ENCODE measurements at regions of chr7 and their contacts with region 1.

Region 1: DNA sequence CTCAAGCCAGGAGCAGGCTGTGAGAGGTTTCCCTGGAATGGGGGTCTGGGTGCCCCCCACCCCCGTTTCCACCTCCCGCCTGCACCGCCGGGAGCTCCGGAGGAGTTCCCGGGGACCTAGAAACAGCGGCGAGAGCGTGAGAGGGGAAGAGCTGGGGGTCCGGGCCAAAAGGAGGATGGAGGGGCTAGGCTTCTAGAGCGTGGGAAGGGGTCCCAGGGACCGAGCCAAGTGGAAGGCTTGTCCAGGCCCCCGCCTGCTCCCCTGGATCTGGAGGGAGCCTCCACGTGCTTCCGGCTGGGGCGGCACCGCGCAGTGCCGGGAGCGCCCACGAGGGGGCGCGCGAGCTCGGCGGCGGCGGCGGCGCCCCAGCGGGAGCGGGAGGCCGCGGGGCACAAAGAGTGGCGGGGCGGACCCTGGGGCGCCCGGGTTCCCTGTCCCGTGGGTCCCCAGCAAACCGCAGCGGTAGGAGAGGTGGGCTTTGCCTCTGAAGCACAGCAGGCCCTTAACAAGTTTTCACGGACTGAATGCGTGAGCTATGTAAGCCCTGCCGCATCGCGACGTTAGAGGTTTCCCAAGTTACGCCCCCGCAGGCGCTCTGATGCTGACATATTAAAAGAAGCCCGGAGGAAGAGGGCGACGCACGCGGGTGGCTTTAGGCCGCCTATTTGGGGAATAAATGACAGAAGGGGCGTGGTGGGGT is 104.4 kb upstream of the LRRC4 start:
- DNase-seq: peak; percentile 81
- ATAC-seq: peak; percentile 96
- H3K4me3 Mint-ChIP-seq: peak overlapping the region; percentile 82
- H3K27ac Mint-ChIP-seq: no peak overlapping the region
- H3K4me1 Mint-ChIP-seq: peaks cover 22% of the 10 kb centered on the region
- H3K27me3 Mint-ChIP-seq: peaks cover 20% of the 10 kb centered on the region
- CTCF ChIP-seq: peak; percentile 97

Region 2: DNA sequence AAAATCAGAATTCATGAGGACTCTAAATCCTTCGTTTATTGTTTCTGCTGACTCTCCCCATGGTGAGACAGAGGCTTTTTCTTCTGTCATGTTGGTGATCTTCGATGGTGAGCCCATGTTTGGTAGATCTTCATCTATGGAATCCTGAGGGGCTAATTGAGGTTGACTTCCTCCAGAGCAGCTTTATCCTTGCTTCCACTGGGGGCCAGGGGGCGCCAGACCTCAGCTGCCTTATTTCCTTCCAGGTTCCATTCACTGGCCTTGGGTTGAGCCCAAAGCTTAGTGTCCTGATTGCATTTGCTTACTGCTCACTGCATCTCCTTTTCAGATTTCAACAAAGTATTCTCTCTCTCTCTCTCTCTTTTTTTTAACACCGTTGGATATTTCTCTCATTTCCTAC is 631.0 kb before region 1 on chr7:
- CTCF ChIA-PET with region 1: no interaction called
- POLR2A ChIA-PET with region 1: no interaction called
- intact Hi-C with region 1: loop called (anchors 1 kb)
- DNase-seq: no peak
- ATAC-seq: no peak
- H3K4me3 Mint-ChIP-seq: no peak overlapping the region
- H3K27ac Mint-ChIP-seq: no peak overlapping the region
- H3K4me1 Mint-ChIP-seq: no peaks in the 10 kb centered on the region
- H3K27me3 Mint-ChIP-seq: peaks cover 21% of the 10 kb centered on the region
- CTCF ChIP-seq: no peak

Region 3: DNA sequence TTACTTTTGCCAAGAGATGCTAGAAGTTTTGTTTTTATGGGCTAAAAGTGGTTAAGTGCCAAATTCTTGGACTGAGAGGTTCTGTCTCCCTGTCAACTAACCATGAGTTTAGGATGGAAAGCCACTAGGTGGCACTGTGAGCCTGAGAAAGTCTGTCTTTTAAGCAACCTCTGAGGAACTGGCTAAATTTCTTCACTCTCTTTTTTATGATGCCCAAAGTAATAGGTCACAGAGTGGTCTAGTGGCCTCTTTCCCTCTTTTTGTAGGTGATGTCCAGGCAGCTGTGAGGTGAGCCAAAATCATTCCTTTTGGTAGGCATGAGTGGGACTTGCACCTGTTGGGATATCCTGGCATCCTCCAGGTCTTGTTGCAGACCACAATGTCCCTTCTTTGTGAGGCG is 426.9 kb before region 1 on chr7:
- CTCF ChIA-PET with region 1: interaction called, 17 read pairs
- POLR2A ChIA-PET with region 1: no interaction called
- intact Hi-C with region 1: loop called (anchors 1 kb)
- DNase-seq: no peak
- ATAC-seq: peak; percentile 85
- H3K4me3 Mint-ChIP-seq: no peak overlapping the region
- H3K27ac Mint-ChIP-seq: no peak overlapping the region
- H3K4me1 Mint-ChIP-seq: no peaks in the 10 kb centered on the region
- H3K27me3 Mint-ChIP-seq: no peaks in the 10 kb centered on the region
- CTCF ChIP-seq: no peak

Region 4: GRCh38 chr7:128031901-128032604 is 103.6 kb before region 1 on chr7:
- CTCF ChIA-PET with region 1: interaction called, 3 read pairs
- POLR2A ChIA-PET with region 1: no interaction called
- intact Hi-C with region 1: loop called (anchors 5 kb)
- DNase-seq: peak; percentile 45
- ATAC-seq: peak; percentile 83
- H3K4me3 Mint-ChIP-seq: peak overlapping the region; percentile 88
- H3K27ac Mint-ChIP-seq: no peak overlapping the region
- H3K4me1 Mint-ChIP-seq: peaks cover 26% of the 10 kb centered on the region
- H3K27me3 Mint-ChIP-seq: peaks cover 4% of the 10 kb centered on the region
- CTCF ChIP-seq: no peak

Region 5: GRCh38 chr7:128108641-128109423 is 26.8 kb before region 1 on chr7:
- CTCF ChIA-PET with region 1: interaction called, 8 read pairs
- POLR2A ChIA-PET with region 1: interaction called, 4 read pairs
- intact Hi-C with region 1: loop called (anchors 1 kb)
- DNase-seq: no peak
- ATAC-seq: peak; percentile 81
- H3K4me3 Mint-ChIP-seq: peak overlapping the region; percentile 76
- H3K27ac Mint-ChIP-seq: peak overlapping the region; percentile 90
- H3K4me1 Mint-ChIP-seq: peaks cover 80% of the 10 kb centered on the region
- H3K27me3 Mint-ChIP-seq: no peaks in the 10 kb centered on the region
- CTCF ChIP-seq: no peak

Region 6: DNA sequence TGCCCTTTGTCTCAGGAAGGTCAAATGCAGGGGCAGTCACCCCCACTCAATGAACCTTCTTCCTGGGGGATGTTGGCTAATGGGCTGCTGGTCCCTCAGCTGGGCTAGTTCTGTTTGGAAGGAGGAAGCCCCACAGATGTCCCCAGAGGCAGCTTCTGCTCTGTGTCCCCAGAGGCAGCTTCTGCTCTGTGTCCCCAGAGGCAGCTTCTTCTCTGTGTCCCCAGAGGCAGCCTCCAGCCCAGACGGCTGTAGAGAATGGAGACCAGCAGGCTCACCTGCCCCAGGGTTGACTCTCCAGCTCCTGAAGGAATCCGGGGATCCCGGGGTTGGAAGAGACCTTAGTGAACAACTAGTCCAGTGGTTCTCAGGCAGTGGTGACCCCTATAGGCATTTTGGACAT is 42.9 kb after region 1 on chr7:
- CTCF ChIA-PET with region 1: interaction called, 10 read pairs
- POLR2A ChIA-PET with region 1: no interaction called
- intact Hi-C with region 1: loop called (anchors 1 kb)
- DNase-seq: peak; percentile 49
- ATAC-seq: peak; percentile 100
- H3K4me3 Mint-ChIP-seq: no peak overlapping the region
- H3K27ac Mint-ChIP-seq: no peak overlapping the region
- H3K4me1 Mint-ChIP-seq: peaks cover 49% of the 10 kb centered on the region
- H3K27me3 Mint-ChIP-seq: peaks cover 31% of the 10 kb centered on the region
- CTCF ChIP-seq: no peak